ENCODE measurements at regions of chr7 and their contacts with region 1.

Region 1: GRCh38 chr7:150620617-150621371 is 11.4 kb downstream of the GIMAP6 start:
- DNase-seq: no peak
- H3K4me3 Mint-ChIP-seq: no peak overlapping the region
- H3K27ac Mint-ChIP-seq: peak overlapping the region; percentile 82
- H3K4me1 Mint-ChIP-seq: peaks cover 56% of the 10 kb centered on the region
- H3K27me3 Mint-ChIP-seq: no peaks in the 10 kb centered on the region

Region 2: GRCh38 chr7:150489782-150490181 is 131.0 kb before region 1 on chr7:
- CTCF ChIA-PET with region 1: no interaction called
- POLR2A ChIA-PET with region 1: no interaction called
- DNase-seq: no peak
- H3K4me3 Mint-ChIP-seq: no peak overlapping the region
- H3K27ac Mint-ChIP-seq: no peak overlapping the region
- H3K4me1 Mint-ChIP-seq: peaks cover 37% of the 10 kb centered on the region
- H3K27me3 Mint-ChIP-seq: no peaks in the 10 kb centered on the region

Region 3: DNA sequence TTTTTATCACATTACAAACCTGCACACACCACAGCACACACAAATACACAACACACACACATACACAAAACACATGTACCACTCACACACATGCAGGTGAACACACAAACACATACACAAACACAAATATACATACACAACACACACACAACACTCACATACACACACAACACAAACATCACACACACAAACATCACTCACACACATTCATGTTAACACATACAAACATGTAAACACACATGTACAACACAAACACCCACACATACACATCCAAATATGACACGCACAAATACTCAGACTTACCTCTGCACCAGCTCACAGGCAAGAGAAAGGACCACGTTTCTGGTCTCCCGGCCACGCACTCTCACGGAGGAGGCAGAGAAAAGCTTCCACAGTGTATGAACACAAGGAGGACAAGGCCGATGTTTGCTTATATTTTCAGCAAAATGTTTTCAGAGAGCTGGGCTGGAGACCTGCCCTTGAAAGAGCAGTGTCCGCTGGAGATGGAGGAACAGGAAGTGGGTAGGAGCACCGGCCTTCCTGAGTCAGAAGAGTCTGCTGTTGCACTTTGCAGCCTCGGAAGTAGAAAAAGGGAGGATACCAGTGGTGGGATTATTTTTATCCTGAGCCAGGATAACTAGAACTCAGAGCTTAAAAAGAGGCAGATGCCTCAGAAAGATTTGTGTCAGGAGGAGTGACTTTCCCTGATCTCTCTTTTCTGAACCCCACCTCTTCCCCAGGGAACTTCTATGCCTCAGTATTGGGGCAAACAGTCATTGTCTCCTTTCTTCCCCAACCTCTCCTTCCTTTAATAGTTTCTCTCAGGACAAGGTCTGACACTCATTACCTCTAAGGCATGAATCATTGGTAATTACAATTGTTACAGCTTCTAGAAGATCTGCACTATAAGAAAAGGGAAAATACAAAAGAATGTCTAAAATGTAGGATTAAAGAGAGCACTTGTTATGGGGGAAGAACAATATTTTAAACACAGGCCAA is 11.4 kb after region 1 on chr7 and contains the start of gene GIMAP6:
- CTCF ChIA-PET with region 1: no interaction called
- POLR2A ChIA-PET with region 1: interaction called, 27 read pairs
- DNase-seq: peak; percentile 56
- H3K4me3 Mint-ChIP-seq: peak within 1 kb of the TSS; percentile 98
- H3K27ac Mint-ChIP-seq: peak within 1 kb of the TSS; percentile 89
- H3K4me1 Mint-ChIP-seq: peaks cover 68% of the 10 kb centered on the region
- H3K27me3 Mint-ChIP-seq: no peaks in the 10 kb centered on the region
- total RNA-seq, gene GIMAP6: 84.9 to 85.9 TPM

Region 4: DNA sequence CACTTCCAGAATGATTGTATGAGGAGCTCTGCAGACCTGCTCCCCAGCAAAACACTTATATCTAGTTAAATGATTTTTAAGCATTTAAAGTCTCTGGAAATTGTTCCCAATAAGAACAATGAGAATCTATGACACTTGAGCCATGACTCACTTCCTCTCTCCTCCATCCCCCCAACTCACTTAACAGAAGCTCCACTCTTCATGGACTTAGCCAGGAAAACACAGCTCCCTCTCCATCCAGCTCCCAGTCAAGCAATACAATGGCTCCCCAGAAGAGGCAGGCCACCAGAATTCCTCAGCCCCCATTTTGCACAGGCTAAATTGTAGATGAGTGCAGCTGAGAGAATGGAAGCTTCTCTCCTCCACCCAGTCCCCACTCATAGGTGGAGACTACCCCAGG is 258.6 kb after region 1 on chr7:
- CTCF ChIA-PET with region 1: no interaction called
- POLR2A ChIA-PET with region 1: no interaction called
- DNase-seq: no peak
- H3K4me3 Mint-ChIP-seq: no peak overlapping the region
- H3K27ac Mint-ChIP-seq: no peak overlapping the region
- H3K4me1 Mint-ChIP-seq: peaks cover 3% of the 10 kb centered on the region
- H3K27me3 Mint-ChIP-seq: peaks cover 59% of the 10 kb centered on the region